ENCODE measurements at regions of chr16 and their contacts with region 1.

Region 1: GRCh38 chr16:56317998-56318826 is 107.1 kb downstream of the AMFR start:
- DNase-seq: no peak
- H3K4me3 ChIP-seq: 0 out of 2 replicates have a peak overlapping the region, but pooled peaks have one; percentile 7
- H3K27me3 ChIP-seq: no peaks in the 10 kb centered on the region; the same call in 1 of the 2 replicates
- CTCF ChIP-seq: peak; percentile 92

Region 2: DNA sequence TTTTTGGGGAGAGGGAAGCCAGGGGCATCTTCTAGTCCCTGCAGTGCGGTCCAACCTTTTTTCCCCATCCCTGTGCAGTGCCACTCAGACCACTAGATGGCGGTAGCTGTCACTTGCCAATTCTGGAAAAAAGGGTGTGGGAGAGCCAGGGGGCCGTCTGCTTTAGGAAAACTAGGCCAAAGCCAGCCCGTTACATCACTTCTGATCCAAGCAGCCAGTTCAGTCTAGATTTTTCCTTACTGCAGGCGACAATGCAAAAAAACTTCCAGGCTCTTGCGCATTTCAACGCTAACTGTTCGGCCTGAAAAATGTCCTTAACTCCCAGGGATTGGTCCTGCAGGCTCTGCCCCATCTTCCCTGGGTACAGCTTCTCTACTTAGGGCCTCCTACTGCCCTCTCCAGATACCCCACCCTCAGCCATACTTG is 373.8 kb before region 1 on chr16:
- CTCF ChIA-PET with region 1: interaction called, 132 read pairs
- POLR2A ChIA-PET with region 1: no interaction called
- DNase-seq: no peak
- H3K4me3 ChIP-seq: no peak overlapping the region
- H3K27me3 ChIP-seq: no peaks in the 10 kb centered on the region
- CTCF ChIP-seq: peak; percentile 97

Region 3: GRCh38 chr16:56269811-56270684 is 48.2 kb before region 1 on chr16:
- CTCF ChIA-PET with region 1: interaction called, 10 read pairs
- POLR2A ChIA-PET with region 1: no interaction called
- DNase-seq: peak; percentile 56
- H3K4me3 ChIP-seq: no peak overlapping the region
- H3K27me3 ChIP-seq: no peaks in the 10 kb centered on the region
- CTCF ChIP-seq: peak; percentile 71

Region 4: GRCh38 chr16:56300891-56301850 is 17.0 kb before region 1 on chr16:
- CTCF ChIA-PET with region 1: interaction called, 21 read pairs
- POLR2A ChIA-PET with region 1: no interaction called
- DNase-seq: peak; percentile 37
- H3K4me3 ChIP-seq: no peak overlapping the region
- H3K27me3 ChIP-seq: no peaks in the 10 kb centered on the region; the same call in 1 of the 2 replicates
- CTCF ChIP-seq: no peak

Region 5: DNA sequence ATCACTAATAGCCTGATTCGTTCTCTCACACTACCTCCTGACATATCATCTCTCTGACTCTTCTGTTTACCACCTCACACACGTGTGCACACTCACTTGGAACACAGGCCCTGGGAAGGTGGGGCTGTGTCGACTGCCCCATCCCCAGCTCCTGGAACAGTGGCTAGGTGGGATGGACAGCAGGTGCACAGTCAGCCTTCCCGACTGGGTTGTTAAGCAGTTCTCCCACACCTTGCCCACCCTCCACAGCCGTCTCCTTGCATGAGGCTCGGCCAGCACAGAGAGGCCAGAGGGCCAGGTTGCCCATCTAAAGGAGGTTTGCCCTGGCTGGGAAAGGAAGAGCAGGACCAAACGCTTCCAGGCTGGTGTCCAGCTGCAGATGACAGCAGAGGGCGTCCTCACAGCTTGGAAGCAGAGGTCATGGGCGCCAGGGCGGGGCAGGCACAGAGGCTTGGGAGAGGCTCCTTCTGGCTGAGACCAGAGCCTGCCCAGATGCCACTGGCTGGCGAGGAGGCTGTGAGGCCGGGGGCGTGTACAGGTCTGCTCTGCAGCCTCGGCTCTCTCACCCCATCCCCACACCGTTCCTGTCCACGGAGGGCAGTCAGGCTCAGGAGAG is 14.4 kb after region 1 on chr16:
- CTCF ChIA-PET with region 1: interaction called, 37 read pairs
- POLR2A ChIA-PET with region 1: no interaction called
- DNase-seq: no peak
- H3K4me3 ChIP-seq: no peak overlapping the region
- H3K27me3 ChIP-seq: no peaks in the 10 kb centered on the region
- CTCF ChIP-seq: peak; percentile 63